ENCODE measurements at regions of chr16 and their contacts with region 1.

Region 1: DNA sequence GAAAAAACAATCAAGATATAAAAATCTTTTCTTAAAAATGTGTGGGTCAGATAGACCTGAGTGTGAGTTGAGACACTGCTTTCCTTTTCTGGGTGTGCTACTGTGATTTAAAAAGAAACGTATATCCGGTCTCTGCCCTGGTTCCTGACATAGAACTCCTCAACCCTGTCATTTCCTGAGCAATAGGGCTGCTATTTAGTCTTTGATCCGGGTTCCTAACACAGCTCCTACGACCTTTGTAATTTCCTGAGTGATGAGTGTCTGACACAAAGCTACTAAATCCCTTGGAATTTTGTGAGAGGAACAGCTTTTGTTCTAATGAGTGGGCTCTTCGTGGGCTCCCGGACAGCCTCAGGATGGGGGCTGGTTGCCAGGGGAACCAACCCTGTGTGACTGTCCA is 93.9 kb upstream of the FA2H start:
- DNase-seq: peak; percentile 24
- H3K4me3 Mint-ChIP-seq: peak overlapping the region; percentile 25
- H3K27ac Mint-ChIP-seq: peak overlapping the region; percentile 88
- H3K4me1 Mint-ChIP-seq: peaks cover 25% of the 10 kb centered on the region
- H3K27me3 Mint-ChIP-seq: no peaks in the 10 kb centered on the region

Region 2: GRCh38 chr16:74774203-74775116 is 94.0 kb before region 1 on chr16 and contains the start of gene FA2H:
- CTCF ChIA-PET with region 1: interaction called, 11 read pairs
- intact Hi-C with region 1: loop called (anchors 5 kb)
- DNase-seq: peak; percentile 79
- H3K4me3 Mint-ChIP-seq: peak within 1 kb of the TSS; percentile 62
- H3K27ac Mint-ChIP-seq: no peak within 1 kb of the TSS
- H3K4me1 Mint-ChIP-seq: peaks cover 12% of the 10 kb centered on the region
- H3K27me3 Mint-ChIP-seq: peaks cover 33% of the 10 kb centered on the region
- total RNA-seq, gene FA2H: 0.15 TPM in 1 of 2 experiments, not detected in the other

Region 3: DNA sequence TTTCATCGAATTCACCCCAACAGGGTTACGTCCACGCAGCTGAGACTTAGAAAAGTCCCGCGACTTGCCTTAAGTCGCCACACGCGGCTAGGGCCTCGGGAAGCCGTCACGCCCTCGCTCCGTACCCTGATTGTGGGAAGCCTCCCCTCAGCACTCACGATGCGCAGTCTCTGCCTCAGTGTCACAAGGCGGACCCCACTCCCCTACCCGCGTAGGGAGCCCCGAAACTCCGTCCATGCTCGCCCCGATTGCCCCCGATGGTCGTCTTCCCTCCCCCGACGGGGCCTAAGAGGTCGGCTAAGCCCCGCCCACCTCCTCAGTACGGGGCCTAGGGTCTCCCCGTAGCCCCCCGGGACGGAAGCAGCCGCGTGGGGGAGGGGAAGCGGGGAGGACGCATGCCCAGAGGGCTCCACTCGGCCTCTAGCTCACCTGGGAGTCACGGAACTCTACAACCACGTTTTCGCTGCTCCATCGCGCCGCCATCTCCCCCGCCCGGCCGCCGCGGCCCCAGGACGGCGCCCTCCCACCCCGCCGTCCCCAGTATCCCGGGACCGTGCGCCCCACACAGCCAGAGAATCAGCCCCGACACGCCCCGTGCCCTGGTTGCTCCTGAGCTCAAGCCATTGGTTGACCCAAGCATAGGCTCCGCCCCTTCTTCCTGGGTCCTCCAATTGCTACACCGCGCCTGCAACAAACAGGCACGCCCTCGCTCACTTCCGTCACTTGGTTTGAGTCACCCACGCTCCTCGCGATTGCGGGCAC is 116.2 kb after region 1 on chr16 and contains the start of gene WDR59:
- CTCF ChIA-PET with region 1: interaction called, 3 read pairs
- intact Hi-C with region 1: loop called (anchors 1 kb)
- DNase-seq: peak; percentile 100
- H3K4me3 Mint-ChIP-seq: peak within 1 kb of the TSS; percentile 88
- H3K27ac Mint-ChIP-seq: peak within 1 kb of the TSS; percentile 73
- H3K4me1 Mint-ChIP-seq: peaks cover 16% of the 10 kb centered on the region
- H3K27me3 Mint-ChIP-seq: no peaks in the 10 kb centered on the region
- total RNA-seq, gene WDR59: 47.8 to 55.6 TPM